ENCODE measurements at regions of chr13 and their contacts with region 1.

Region 1: GRCh38 chr13:99436686-99437416 is 64.4 kb upstream of the TM9SF2 start:
- DNase-seq: peak; percentile 83
- CTCF ChIP-seq: peak; percentile 100

Region 2: GRCh38 chr13:99176309-99177276 is 260.3 kb before region 1 on chr13:
- CTCF ChIA-PET with region 1: interaction called, 17 read pairs
- POLR2A ChIA-PET with region 1: no interaction called
- DNase-seq: peak; percentile 86
- CTCF ChIP-seq: peak; percentile 88

Region 3: DNA sequence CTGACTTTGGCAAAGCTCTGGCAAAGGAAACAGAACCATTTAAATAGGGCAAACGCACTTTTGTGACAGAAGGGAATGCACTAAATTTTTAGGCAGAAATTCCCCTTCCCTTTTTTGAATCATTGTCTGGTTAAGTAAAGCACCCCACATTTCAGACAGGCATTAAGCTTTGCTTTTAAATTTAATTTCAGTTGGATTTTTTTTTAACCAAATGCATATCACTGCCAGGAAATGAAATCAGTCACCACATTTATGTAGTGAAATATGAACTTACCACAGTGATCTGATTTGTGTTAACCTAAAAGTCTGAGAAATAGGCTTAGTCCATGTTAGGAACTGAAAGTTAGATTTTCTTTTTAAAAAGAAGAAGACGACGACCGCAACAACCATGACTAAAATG is 140.5 kb before region 1 on chr13:
- CTCF ChIA-PET with region 1: interaction called, 25 read pairs
- POLR2A ChIA-PET with region 1: no interaction called
- DNase-seq: no peak
- CTCF ChIP-seq: no peak

Region 4: DNA sequence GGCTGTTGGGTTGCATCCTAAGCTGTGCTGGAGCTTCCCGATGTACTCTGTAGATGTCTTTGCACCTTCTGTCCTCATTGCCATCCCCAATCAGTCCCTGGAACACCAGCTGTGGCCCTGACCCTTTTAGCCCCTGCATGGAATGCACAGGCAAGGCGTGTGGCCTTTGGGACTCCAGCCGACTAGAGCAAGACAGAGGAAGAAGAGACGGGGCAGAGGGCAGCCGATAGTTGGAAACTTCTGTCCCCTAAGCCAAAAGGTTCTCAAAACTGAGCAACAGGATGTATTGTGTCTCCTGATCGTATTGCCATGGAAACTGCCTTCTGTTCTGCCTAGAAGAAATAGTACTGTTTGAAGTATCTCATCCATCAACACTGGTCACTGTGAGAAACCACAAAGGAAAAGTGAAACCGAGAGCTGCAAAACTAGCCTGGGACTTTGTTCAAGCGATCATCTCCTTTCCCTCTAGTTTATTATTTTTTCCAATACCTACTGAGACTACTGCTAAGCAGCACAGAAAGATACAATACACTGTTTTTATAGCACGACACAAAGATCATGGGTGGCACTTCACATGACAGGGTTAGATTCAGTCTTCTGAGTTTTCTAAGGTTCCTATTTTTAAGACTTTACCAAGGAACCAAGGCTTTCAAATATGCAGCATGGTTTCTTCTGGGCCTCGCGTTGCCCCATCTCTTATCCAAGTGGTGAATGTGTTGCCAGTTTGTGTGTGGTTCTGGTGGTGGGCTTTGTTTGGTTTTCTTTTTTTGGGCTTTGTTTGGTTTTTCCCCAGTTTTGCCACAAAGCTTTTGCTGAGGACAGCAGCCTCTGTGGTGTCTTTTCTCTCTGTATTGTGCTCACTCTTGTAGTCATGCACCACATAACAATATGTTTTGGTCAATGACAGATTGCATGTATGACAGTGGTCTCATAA is 80.4 kb before region 1 on chr13:
- CTCF ChIA-PET with region 1: interaction called, 10 read pairs
- POLR2A ChIA-PET with region 1: no interaction called
- DNase-seq: peak; percentile 75
- CTCF ChIP-seq: no peak

Region 5: GRCh38 chr13:99406799-99407201 is 30.1 kb before region 1 on chr13:
- CTCF ChIA-PET with region 1: interaction called, 51 read pairs
- POLR2A ChIA-PET with region 1: no interaction called
- DNase-seq: no peak
- CTCF ChIP-seq: no peak

Region 6: GRCh38 chr13:99484473-99484872 is 47.6 kb after region 1 on chr13:
- CTCF ChIA-PET with region 1: interaction called, 11 read pairs
- POLR2A ChIA-PET with region 1: no interaction called
- DNase-seq: no peak
- CTCF ChIP-seq: no peak